PC-9 (cell line): ENCODE measurements at regions of chr11 and their contacts with region 1.

Region 1: GRCh38 chr11:118145285-118146227 is 7.1 kb downstream of the SCN4B start:
- DNase-seq: peak; percentile 81 to 91
- H3K4me3 ChIP-seq: peak overlapping the region; percentile 55
- H3K27ac ChIP-seq: no peak overlapping the region
- H3K4me1 ChIP-seq: peaks cover 6% of the 10 kb centered on the region; the same call in 1 of the 2 replicates
- H3K27me3 ChIP-seq: peaks cover 29% of the 10 kb centered on the region
- CTCF ChIP-seq: peak; percentile 94

Region 2: GRCh38 chr11:118171269-118172062 is 25.9 kb after region 1 on chr11:
- CTCF ChIA-PET with region 1: no interaction called
- POLR2A ChIA-PET with region 1: no interaction called
- intact Hi-C with region 1: loop called (anchors 1 kb)
- DNase-seq: peak in 1 of 2 experiments; percentile 53
- H3K4me3 ChIP-seq: no peak overlapping the region
- H3K27ac ChIP-seq: no peak overlapping the region
- H3K4me1 ChIP-seq: peaks cover 24% of the 10 kb centered on the region
- H3K27me3 ChIP-seq: peaks cover 40% of the 10 kb centered on the region
- CTCF ChIP-seq: peak; percentile 98

Region 3: GRCh38 chr11:118290923-118291322 is 145.4 kb after region 1 on chr11:
- CTCF ChIA-PET with region 1: no interaction called
- POLR2A ChIA-PET with region 1: no interaction called
- intact Hi-C with region 1: loop called (anchors 1 kb)
- DNase-seq: peak; percentile 43 to 65
- H3K4me3 ChIP-seq: no peak overlapping the region
- H3K27ac ChIP-seq: no peak overlapping the region
- H3K4me1 ChIP-seq: peaks cover 33% of the 10 kb centered on the region
- H3K27me3 ChIP-seq: no peaks in the 10 kb centered on the region
- CTCF ChIP-seq: peak; percentile 68

Region 4: DNA sequence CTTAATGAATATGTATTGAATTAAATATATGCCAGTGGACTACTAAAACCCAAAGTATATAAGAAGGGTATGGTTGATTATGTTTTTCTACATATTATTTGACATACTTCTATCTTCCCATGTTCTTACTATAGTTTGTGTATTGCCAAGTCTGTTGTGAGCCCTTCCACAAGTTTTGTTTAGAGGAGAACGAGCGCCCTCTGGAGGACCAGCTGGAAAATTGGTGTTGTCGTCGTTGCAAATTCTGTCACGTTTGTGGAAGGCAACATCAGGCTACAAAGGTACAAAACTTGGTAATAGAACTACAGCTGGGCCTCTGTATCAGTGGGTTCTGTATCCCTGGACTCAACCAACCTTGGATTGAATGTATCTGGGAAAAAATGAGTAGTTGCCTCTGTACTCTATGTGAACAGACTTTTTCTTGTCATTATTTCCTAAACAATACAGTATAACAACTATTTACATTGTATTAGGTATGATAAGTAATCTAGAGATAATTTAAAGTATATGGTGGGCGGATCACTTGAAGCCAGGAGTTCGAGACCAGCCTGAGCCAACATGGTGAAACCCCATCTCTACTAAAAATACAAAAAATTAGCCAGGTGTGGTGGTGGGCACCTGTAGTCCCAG is 343.0 kb after region 1 on chr11:
- CTCF ChIA-PET with region 1: no interaction called
- POLR2A ChIA-PET with region 1: no interaction called
- intact Hi-C with region 1: loop called (anchors 1 kb)
- DNase-seq: peak; percentile 58 to 64
- H3K4me3 ChIP-seq: no peak overlapping the region
- H3K27ac ChIP-seq: no peak overlapping the region
- H3K4me1 ChIP-seq: no peaks in the 10 kb centered on the region
- H3K27me3 ChIP-seq: no peaks in the 10 kb centered on the region
- CTCF ChIP-seq: peak; percentile 97

Region 5: GRCh38 chr11:118659314-118659952 is 513.9 kb after region 1 on chr11:
- CTCF ChIA-PET with region 1: no interaction called
- POLR2A ChIA-PET with region 1: no interaction called
- intact Hi-C with region 1: loop called (anchors 1 kb)
- DNase-seq: peak; percentile 81 to 92
- H3K4me3 ChIP-seq: no peak overlapping the region
- H3K27ac ChIP-seq: no peak overlapping the region
- H3K4me1 ChIP-seq: peaks cover 11% of the 10 kb centered on the region
- H3K27me3 ChIP-seq: no peaks in the 10 kb centered on the region
- CTCF ChIP-seq: peak; percentile 98